ENCODE measurements at regions of chr10 and their contacts with region 1.

Region 1: GRCh38 chr10:28302638-28303488 is at the start of gene MPP7:
- DNase-seq: peak; percentile 97 to 98 (median 98)
- H3K4me3 ChIP-seq: peak within 1 kb of the TSS; percentile 73 to 95 (median 94)
- H3K4me3 Mint-ChIP-seq: peak within 1 kb of the TSS; percentile 90 to 97
- H3K27ac ChIP-seq: peak within 1 kb of the TSS; percentile 64 to 84
- H3K27ac Mint-ChIP-seq: peak within 1 kb of the TSS; percentile 84 to 96 (median 92)
- H3K4me1 ChIP-seq: peaks cover 62 to 66% of the 10 kb centered on the region in 2 donors
- H3K4me1 Mint-ChIP-seq: peaks cover 82% of the 10 kb centered on the region
- H3K27me3 ChIP-seq: no peaks in the 10 kb centered on the region
- H3K27me3 Mint-ChIP-seq: peaks cover 0 to 2% (median 0%) of the 10 kb centered on the region in 3 donors
- CTCF ChIP-seq: peak; percentile 78
- polyA plus RNA-seq, gene MPP7: 17.3 to 48.3 (median 33.6) TPM

Region 2: DNA sequence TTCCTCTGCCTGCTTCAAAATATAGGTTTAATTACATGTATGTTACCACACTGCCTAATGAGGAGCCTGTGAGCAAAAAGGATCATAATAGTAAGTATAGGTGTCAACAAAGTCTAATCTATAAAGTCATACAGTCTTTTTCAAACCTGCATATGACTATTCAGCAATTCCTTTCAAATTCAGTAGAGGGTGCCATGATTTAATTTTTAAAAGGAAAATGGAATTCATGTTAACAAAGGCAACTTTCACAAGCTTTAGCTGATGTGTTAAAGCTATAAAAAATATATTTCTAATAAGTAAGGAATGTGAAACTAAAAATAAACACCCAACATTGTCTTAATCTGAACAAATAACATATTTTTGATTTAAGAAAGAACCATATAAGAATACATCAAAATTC is 52.1 kb before region 1 on chr10:
- intact Hi-C with region 1: loop called (anchors 5 to 10 kb)
- DNase-seq: peak in 1 of 3 donors; percentile 18
- H3K4me3 ChIP-seq: no peak overlapping the region
- H3K4me3 Mint-ChIP-seq: no peak overlapping the region
- H3K27ac ChIP-seq: no peak overlapping the region
- H3K27ac Mint-ChIP-seq: peak overlapping the region in 1 of 7 donors; percentile 25
- H3K4me1 ChIP-seq: peaks cover 46 to 63% of the 10 kb centered on the region in 2 donors
- H3K4me1 Mint-ChIP-seq: peaks cover 71% of the 10 kb centered on the region
- H3K27me3 ChIP-seq: no peaks in the 10 kb centered on the region
- H3K27me3 Mint-ChIP-seq: peaks cover 0 to 4% (median 0%) of the 10 kb centered on the region in 3 donors
- CTCF ChIP-seq: peak; percentile 65

Region 3: GRCh38 chr10:28334296-28334695 is 31.4 kb after region 1 on chr10:
- intact Hi-C with region 1: loop called (anchors 2 kb)
- DNase-seq: peak; percentile 89 to 98 (median 89)
- H3K4me3 ChIP-seq: no peak overlapping the region
- H3K4me3 Mint-ChIP-seq: peak overlapping the region; percentile 24 to 57
- H3K27ac ChIP-seq: peak overlapping the region; percentile 95 to 97
- H3K27ac Mint-ChIP-seq: peak overlapping the region; percentile 90 to 99 (median 99)
- H3K4me1 ChIP-seq: peaks cover 67% of the 10 kb centered on the region in 2 donors
- H3K4me1 Mint-ChIP-seq: peaks cover 63% of the 10 kb centered on the region
- H3K27me3 ChIP-seq: no peaks in the 10 kb centered on the region
- H3K27me3 Mint-ChIP-seq: no peaks in the 10 kb centered on the region
- CTCF ChIP-seq: no peak

Region 4: DNA sequence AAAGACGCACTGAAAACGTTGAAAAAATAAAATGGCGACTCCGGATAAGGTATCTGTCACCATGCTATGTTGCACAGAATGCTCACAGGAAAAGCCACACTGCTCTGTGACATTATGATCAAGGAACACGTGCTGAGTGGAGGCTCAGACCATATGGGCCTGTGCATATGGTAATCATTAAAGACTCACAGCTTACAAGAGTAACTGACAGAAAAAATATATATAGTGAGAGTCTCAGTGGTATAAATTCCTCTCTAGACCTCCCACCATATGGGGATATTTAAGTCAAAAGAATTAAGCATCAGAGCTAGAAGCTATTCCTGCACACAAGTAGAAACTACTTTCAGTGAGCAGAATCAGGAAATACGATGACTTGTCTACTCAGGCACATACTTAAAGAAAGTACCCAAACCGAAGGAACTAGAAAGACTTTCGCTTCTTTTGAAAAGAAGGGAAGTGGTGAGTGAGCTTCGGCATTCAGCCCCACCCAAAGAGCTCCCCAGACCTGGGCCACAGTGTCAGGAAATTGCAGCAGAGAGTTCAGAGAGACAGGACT is 65.1 kb after region 1 on chr10:
- intact Hi-C with region 1: loop called in 1 of 2 experiments (anchors 5 kb)
- DNase-seq: peak; percentile 86 to 95 (median 90)
- H3K4me3 ChIP-seq: peak overlapping the region in 1 of 3 experiments; percentile 53
- H3K4me3 Mint-ChIP-seq: peak overlapping the region in 1 of 2 donors; percentile 42
- H3K27ac ChIP-seq: peak overlapping the region; percentile 83 to 95
- H3K27ac Mint-ChIP-seq: peak overlapping the region; percentile 90 to 96 (median 95)
- H3K4me1 ChIP-seq: peaks cover 56 to 63% of the 10 kb centered on the region in 2 donors
- H3K4me1 Mint-ChIP-seq: peaks cover 58% of the 10 kb centered on the region
- H3K27me3 ChIP-seq: no peaks in the 10 kb centered on the region
- H3K27me3 Mint-ChIP-seq: peaks cover 0 to 2% (median 0%) of the 10 kb centered on the region in 3 donors
- CTCF ChIP-seq: no peak